Activated B cell treated with CpG ODN at 0.5 μM for 24 hours (primary cell): ENCODE measurements at regions of chr14 and their contacts with region 1.

Region 1: GRCh38 chr14:22570132-22570949 is 18.7 kb downstream of the DAD1 start:
- DNase-seq: peak; percentile 53
- ATAC-seq: peak; percentile 88
- H3K4me3 Mint-ChIP-seq: peak overlapping the region; percentile 74
- H3K27ac Mint-ChIP-seq: peak overlapping the region; percentile 94
- H3K4me1 Mint-ChIP-seq: peaks cover 53% of the 10 kb centered on the region
- H3K27me3 Mint-ChIP-seq: no peaks in the 10 kb centered on the region
- CTCF ChIP-seq: peak; percentile 76

Region 2: GRCh38 chr14:22319526-22320361 is 250.6 kb before region 1 on chr14:
- CTCF ChIA-PET with region 1: interaction called, 47 read pairs
- POLR2A ChIA-PET with region 1: no interaction called
- intact Hi-C with region 1: loop called (anchors 1 kb)
- DNase-seq: no peak
- ATAC-seq: peak; percentile 77
- H3K4me3 Mint-ChIP-seq: no peak overlapping the region
- H3K27ac Mint-ChIP-seq: no peak overlapping the region
- H3K4me1 Mint-ChIP-seq: no peaks in the 10 kb centered on the region
- H3K27me3 Mint-ChIP-seq: peaks cover 4% of the 10 kb centered on the region
- CTCF ChIP-seq: no peak

Region 3: DNA sequence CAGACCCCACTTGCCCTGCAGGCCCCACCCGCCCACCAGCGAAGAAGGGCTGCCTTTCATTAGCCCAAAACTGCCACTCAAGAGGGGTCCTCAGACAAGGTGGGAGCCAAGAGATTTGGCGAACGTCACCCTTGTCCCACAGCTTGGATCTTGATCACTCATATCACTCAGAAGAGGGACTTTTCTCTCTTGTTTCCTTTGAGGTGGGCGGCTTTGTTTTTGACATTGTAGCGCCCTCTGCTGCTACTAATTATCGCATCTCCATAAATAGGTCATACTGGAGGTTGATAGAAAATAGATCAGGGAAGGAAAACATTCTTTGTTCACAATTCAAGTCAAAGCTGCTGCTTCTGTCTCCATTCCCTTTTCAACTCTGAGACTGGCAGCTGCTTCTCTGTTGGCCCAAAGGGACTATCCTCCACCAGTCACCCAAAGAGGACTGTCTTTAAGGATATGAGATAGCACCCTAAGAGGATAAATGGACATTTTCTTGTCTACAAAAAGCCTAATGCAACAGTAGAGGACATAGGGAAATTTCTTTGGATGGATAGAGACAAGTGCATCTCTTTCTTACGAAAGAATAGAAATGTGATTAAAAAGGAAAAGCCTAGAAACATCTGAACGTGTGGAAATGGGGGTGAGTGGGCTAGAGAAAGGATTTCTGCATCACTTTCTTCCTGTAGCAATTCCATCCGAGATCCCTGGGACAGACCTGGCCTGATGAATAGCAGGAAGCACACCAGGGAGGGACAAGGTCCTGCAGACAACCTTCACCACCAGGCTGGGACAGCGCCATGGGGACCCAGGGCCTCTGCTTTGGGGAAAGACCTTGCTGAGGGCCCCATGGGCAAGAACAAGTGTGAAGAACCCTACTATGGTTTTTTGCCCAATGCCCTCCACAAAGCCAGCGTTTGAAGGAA is 97.1 kb before region 1 on chr14:
- CTCF ChIA-PET with region 1: interaction called, 113 read pairs
- POLR2A ChIA-PET with region 1: interaction called, 19 read pairs
- intact Hi-C with region 1: loop called (anchors 1 kb)
- DNase-seq: no peak
- ATAC-seq: peak; percentile 64
- H3K4me3 Mint-ChIP-seq: peak overlapping the region; percentile 3
- H3K27ac Mint-ChIP-seq: peak overlapping the region; percentile 65
- H3K4me1 Mint-ChIP-seq: peaks cover 89% of the 10 kb centered on the region
- H3K27me3 Mint-ChIP-seq: no peaks in the 10 kb centered on the region
- CTCF ChIP-seq: peak; percentile 40

Region 4: DNA sequence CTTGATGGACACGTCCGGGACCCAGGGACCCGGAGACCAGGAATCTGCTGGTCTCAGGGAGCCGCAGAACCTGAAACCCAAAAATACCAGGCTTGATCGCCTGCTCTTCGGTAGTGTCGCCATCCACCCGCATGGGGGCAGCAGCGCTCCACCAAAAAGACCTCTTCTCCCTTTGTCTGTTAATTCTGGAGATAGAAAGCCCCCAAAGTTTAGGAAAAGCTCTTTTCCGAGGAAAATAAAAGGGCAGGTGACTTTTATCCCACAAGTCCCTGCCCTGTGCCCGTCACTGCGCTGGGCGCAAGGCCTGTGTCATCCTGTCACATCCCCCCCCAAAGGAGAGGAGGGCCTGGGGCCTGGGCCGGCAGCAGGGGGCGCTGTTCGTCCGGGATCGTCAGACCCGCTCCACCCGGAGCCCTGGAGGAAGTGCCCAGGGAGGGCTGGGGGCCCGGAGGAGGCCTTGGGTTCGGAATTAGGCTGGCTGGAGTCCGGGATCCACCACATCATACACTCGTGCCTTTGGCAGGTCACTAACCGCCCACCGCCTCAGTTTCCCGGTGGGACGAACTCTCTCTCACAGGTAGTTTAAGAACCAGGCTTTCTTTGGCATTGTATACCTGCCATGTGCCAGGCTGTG is 13.2 kb before region 1 on chr14:
- CTCF ChIA-PET with region 1: interaction called, 324 read pairs
- POLR2A ChIA-PET with region 1: interaction called, 163 read pairs
- intact Hi-C with region 1: loop called (anchors 1 kb)
- DNase-seq: peak; percentile 90
- ATAC-seq: peak; percentile 43
- H3K4me3 Mint-ChIP-seq: peak overlapping the region; percentile 80
- H3K27ac Mint-ChIP-seq: peak overlapping the region; percentile 98
- H3K4me1 Mint-ChIP-seq: peaks cover 88% of the 10 kb centered on the region
- H3K27me3 Mint-ChIP-seq: peaks cover 4% of the 10 kb centered on the region
- CTCF ChIP-seq: peak; percentile 100

Region 5: DNA sequence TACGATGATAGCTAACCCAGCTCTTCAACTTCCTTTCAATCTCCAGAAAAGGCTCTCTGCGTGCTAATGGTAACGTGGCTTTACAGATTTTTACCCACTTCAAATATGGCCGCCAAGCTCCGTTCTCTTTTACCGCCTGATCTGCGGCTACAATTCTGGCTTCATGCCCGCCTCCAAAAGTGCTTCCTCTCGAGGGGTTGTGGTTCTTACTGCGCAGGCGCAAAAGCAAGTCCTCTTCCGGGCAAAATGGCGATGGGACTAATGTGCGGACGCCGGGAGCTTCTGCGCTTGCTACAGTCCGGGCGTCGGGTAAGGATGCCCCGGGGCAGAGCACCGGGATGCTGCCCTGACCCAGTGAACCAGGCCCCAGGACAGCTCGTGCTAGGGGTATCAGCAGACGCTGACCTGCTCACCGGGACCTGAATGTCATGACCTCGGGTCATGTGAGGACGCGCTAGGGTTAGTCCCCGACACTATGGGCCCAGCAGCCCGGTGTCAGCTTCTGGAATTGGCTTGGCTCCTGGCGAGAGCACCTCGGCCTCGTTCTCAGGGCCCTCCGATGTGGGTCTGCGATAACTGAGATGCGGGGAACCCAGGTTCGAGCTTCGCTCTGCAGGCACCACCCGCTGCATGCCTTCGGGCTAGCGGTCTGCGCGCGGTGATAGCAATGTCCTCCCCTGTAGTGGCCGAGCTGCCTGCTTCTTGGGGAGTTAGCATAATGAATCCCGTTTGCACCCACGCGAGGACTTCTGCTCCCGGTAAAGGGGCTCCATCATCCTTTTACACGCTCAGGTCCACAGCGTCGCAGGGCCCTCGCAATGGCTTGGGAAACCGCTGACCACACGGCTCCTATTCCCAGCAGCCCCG is 196.3 kb after region 1 on chr14 and contains the start of gene OXA1L:
- CTCF ChIA-PET with region 1: interaction called, 6 read pairs
- POLR2A ChIA-PET with region 1: interaction called, 11 read pairs
- intact Hi-C with region 1: loop called (anchors 1 kb)
- DNase-seq: peak; percentile 79
- ATAC-seq: peak; percentile 89
- H3K4me3 Mint-ChIP-seq: peak within 1 kb of the TSS; percentile 93
- H3K27ac Mint-ChIP-seq: peak within 1 kb of the TSS; percentile 97
- H3K4me1 Mint-ChIP-seq: peaks cover 35% of the 10 kb centered on the region
- H3K27me3 Mint-ChIP-seq: no peaks in the 10 kb centered on the region
- CTCF ChIP-seq: no peak
- total RNA-seq, gene OXA1L: 174 and 190 TPM in 2 replicates

Region 6: GRCh38 chr14:22872033-22872832 is 301.9 kb after region 1 on chr14:
- CTCF ChIA-PET with region 1: interaction called, 15 read pairs
- POLR2A ChIA-PET with region 1: interaction called, 8 read pairs
- intact Hi-C with region 1: loop called (anchors 1 kb)
- DNase-seq: peak; percentile 69
- ATAC-seq: peak; percentile 22
- H3K4me3 Mint-ChIP-seq: peak overlapping the region; percentile 89
- H3K27ac Mint-ChIP-seq: peak overlapping the region; percentile 92
- H3K4me1 Mint-ChIP-seq: peaks cover 33% of the 10 kb centered on the region
- H3K27me3 Mint-ChIP-seq: no peaks in the 10 kb centered on the region
- CTCF ChIP-seq: no peak